HAP-1 (cell line): ENCODE measurements at regions of chrX and their contacts with region 1.

Region 1: GRCh38 chrX:149470955-149471354 is 34.2 kb downstream of the IDS start:
- DNase-seq: peak; percentile 72 to 91
- H3K4me3 ChIP-seq: no peak overlapping the region
- H3K4me1 ChIP-seq: peaks cover 4% of the 10 kb centered on the region
- H3K27me3 ChIP-seq: no peaks in the 10 kb centered on the region

Region 2: GRCh38 chrX:148049441-148049840 is 1421.5 kb before region 1 on chrX:
- in situ Hi-C with region 1: loop called (anchors 25 kb)
- DNase-seq: peak; percentile 12 to 81
- H3K4me3 ChIP-seq: no peak overlapping the region
- H3K4me1 ChIP-seq: no peaks in the 10 kb centered on the region
- H3K27me3 ChIP-seq: no peaks in the 10 kb centered on the region

Region 3: GRCh38 chrX:149296092-149296491 is 174.9 kb before region 1 on chrX:
- in situ Hi-C with region 1: loop called (anchors 10 kb)
- DNase-seq: no peak
- H3K4me3 ChIP-seq: no peak overlapping the region
- H3K4me1 ChIP-seq: no peaks in the 10 kb centered on the region
- H3K27me3 ChIP-seq: no peaks in the 10 kb centered on the region